Activated naive CD8-positive, alpha-beta T cell treated with anti-CD3 and anti-CD28 coated beads, Interleukin-2, amount 10 ng/mL, durations not matched to agents 7 days and 5 days (primary cell): ENCODE measurements at regions of chr6 and their contacts with region 1.

Region 1: GRCh38 chr6:26216356-26216885 is 129.2 kb downstream of the HFE start:
- DNase-seq: peak; percentile 77
- ATAC-seq: peak; percentile 75
- H3K4me3 Mint-ChIP-seq: no peak overlapping the region
- H3K27ac Mint-ChIP-seq: no peak overlapping the region
- H3K4me1 Mint-ChIP-seq: peaks cover 32% of the 10 kb centered on the region
- H3K27me3 Mint-ChIP-seq: no peaks in the 10 kb centered on the region

Region 2: DNA sequence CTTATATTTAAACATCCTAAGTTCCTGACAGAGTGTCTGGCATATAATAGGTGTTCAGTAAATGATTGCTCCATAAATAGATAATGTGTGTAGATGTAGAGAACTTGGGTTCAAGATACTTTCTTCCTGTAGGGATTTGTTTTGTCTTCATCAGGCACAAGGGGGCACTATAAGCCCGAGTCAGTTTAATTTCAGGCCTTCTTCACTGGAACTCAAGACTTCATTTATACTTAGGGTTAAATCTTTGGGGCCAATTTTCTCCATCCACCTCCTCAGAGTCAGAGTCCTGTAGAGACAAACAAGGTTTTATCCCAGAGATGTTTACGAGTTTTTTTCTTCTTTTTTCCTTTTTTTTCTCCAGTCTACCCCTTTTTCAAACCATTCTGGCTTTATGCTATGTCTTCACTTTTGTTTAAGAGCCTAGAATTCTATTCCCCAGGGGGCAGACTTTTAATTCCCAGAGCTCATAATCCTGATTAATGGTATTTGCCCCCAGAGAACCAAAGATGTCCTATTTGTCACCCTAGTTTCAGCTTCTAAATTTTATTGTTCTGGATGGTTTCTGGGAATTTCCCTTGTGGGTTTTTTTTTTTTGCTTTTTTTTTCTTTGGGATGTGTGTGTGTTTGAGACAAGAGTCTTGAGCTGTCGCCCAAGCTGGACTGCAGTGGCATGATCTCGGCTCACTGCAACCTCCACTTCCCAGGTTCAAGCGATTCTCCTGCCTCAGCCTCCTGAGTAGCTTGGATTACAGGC is 40.8 kb before region 1 on chr6:
- POLR2A ChIA-PET with region 1: interaction called, 44 read pairs
- DNase-seq: no peak
- ATAC-seq: no peak
- H3K4me3 Mint-ChIP-seq: peak overlapping the region; percentile 54
- H3K27ac Mint-ChIP-seq: peak overlapping the region; percentile 76
- H3K4me1 Mint-ChIP-seq: peaks cover 41% of the 10 kb centered on the region
- H3K27me3 Mint-ChIP-seq: no peaks in the 10 kb centered on the region

Region 3: GRCh38 chr6:26204332-26205165 is 11.9 kb before region 1 on chr6:
- POLR2A ChIA-PET with region 1: interaction called, 1,314 read pairs
- DNase-seq: peak; percentile 84
- ATAC-seq: peak; percentile 64
- H3K4me3 Mint-ChIP-seq: no peak overlapping the region
- H3K27ac Mint-ChIP-seq: no peak overlapping the region
- H3K4me1 Mint-ChIP-seq: peaks cover 34% of the 10 kb centered on the region
- H3K27me3 Mint-ChIP-seq: no peaks in the 10 kb centered on the region

Region 4: DNA sequence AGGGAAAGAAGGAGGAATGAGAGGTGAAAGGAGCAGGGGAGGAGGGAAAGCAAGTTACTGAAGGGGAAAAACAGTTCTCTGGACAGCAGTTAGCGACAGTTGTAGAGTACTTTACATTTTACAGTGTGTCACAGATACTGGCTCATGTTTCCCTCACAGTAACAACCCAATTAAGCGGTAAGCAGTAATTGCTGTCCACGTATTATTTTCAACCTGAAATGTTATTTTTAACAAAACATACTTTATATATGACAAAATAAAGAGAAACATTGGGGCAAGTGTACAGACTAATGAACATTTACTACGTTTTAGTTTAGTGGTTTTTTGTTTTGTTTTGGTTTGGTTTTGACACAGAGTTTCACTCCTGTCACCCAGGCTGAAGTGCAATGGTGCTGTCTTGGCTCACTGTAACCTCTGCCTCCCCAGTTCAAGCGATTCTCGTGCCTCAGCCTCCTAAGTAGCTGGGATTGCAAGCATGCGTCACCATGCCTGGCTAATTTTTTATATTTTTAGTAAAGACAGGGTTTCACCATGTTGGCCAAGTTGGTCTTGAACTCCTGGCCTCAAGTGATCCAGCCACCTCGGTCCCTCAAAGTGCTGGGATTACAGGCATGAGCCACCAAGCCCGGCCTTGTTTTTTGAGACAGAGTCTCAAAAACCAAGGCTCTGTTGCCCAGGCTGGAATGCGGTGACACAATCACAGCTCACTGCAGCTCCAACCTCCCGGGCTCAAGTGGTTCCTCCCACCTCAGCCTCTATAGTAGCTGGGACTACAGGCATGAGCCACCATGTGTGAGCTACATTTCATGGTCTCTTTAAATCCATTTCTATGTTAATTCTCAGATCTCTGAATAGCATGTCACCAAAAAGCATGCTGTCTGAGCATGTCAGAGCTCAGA is 125.9 kb after region 1 on chr6:
- POLR2A ChIA-PET with region 1: no interaction called
- DNase-seq: no peak
- ATAC-seq: peak; percentile 32
- H3K4me3 Mint-ChIP-seq: peak overlapping the region; percentile 85
- H3K27ac Mint-ChIP-seq: peak overlapping the region; percentile 67
- H3K4me1 Mint-ChIP-seq: peaks cover 20% of the 10 kb centered on the region
- H3K27me3 Mint-ChIP-seq: peaks cover 9% of the 10 kb centered on the region

Region 5: DNA sequence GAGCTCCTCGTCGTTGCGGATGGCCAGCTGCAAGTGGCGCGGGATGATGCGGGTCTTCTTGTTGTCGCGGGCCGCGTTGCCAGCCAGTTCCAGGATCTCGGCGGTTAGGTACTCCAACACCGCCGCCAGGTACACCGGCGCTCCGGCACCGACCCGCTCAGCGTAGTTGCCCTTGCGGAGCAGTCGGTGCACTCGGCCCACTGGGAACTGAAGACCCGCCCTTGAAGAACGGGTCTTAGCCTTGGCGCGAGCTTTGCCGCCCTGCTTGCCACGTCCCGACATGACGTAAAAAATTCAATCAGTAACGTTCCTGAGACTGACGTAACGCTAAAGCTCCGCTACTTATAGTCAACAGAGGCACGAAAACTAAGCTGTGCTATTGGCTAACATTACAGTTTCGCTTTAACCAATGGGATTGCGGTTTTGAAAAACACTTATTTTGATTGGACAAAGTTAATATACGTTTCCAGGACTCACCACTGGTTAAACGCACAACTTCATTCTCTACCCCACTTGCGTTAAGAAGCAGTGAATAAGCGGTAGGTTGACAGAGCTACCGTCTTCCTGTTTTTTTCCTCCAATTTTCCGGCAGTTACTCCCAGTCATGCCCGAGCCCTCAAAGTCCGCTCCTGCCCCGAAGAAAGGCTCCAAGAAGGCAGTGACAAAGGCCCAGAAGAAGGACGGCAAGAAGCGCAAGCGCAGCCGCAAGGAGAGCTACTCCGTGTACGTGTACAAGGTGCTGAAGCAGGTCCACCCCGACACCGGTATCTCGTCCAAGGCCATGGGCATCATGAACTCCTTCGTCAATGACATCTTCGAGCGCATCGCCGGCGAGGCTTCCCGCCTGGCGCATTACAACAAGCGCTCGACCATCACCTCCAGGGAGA is 1621.9 kb after region 1 on chr6:
- POLR2A ChIA-PET with region 1: interaction called, 14 read pairs
- DNase-seq: peak; percentile 84
- ATAC-seq: peak; percentile 74
- H3K4me3 Mint-ChIP-seq: no peak overlapping the region
- H3K27ac Mint-ChIP-seq: no peak overlapping the region
- H3K4me1 Mint-ChIP-seq: peaks cover 26% of the 10 kb centered on the region
- H3K27me3 Mint-ChIP-seq: peaks cover 2% of the 10 kb centered on the region

Region 6: GRCh38 chr6:27871924-27872638 is 1655.7 kb after region 1 on chr6:
- POLR2A ChIA-PET with region 1: interaction called, 28 read pairs
- DNase-seq: peak; percentile 80
- ATAC-seq: peak; percentile 63
- H3K4me3 Mint-ChIP-seq: peak overlapping the region; percentile 92
- H3K27ac Mint-ChIP-seq: peak overlapping the region; percentile 93
- H3K4me1 Mint-ChIP-seq: peaks cover 44% of the 10 kb centered on the region
- H3K27me3 Mint-ChIP-seq: no peaks in the 10 kb centered on the region